Brain microvascular endothelial cell (primary cell): ENCODE measurements at regions of chr2 and their contacts with region 1.

Region 1: GRCh38 chr2:47174733-47175361 is 19.7 kb upstream of the STPG4 start:
- DNase-seq: no peak
- H3K4me3 ChIP-seq: peak overlapping the region; percentile 100
- H3K27ac ChIP-seq: peak overlapping the region; percentile 100
- H3K27me3 ChIP-seq: no peaks in the 10 kb centered on the region
- CTCF ChIP-seq: no peak

Region 2: GRCh38 chr2:47016172-47016913 is 158.5 kb before region 1 on chr2:
- in situ Hi-C with region 1: loop called (anchors 25 kb)
- DNase-seq: peak; percentile 84
- H3K4me3 ChIP-seq: no peak overlapping the region
- H3K27ac ChIP-seq: peak overlapping the region; percentile 64
- H3K27me3 ChIP-seq: no peaks in the 10 kb centered on the region
- CTCF ChIP-seq: peak; percentile 62

Region 3: DNA sequence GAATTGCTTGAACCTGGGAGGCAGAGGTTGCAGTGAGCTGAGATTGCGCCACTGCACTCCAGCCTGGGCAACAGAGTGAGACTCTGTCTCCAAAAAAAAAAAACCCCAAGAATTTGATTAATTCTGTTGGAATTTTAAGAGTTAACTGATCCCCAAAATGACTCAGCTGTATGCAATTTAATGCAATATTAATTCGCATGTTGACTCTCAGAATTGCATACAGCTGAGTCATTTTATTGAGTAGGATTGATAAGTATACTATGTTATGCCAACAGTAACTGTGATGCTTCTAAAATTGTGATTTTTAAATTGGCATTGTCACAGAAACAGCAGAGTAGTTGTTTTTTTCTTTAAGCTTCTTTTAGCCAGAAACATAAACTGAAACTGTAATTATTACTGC is 247.7 kb after region 1 on chr2:
- in situ Hi-C with region 1: no loop called
- DNase-seq: no peak
- H3K4me3 ChIP-seq: no peak overlapping the region
- H3K27ac ChIP-seq: peak overlapping the region; percentile 38
- H3K27me3 ChIP-seq: no peaks in the 10 kb centered on the region
- CTCF ChIP-seq: no peak

Region 4: GRCh38 chr2:47471429-47472116 is 296.7 kb after region 1 on chr2:
- in situ Hi-C with region 1: no loop called
- DNase-seq: no peak
- H3K4me3 ChIP-seq: no peak overlapping the region
- H3K27ac ChIP-seq: no peak overlapping the region
- H3K27me3 ChIP-seq: no peaks in the 10 kb centered on the region
- CTCF ChIP-seq: no peak